ENCODE measurements at regions of chr6 and their contacts with region 1.

Region 1: DNA sequence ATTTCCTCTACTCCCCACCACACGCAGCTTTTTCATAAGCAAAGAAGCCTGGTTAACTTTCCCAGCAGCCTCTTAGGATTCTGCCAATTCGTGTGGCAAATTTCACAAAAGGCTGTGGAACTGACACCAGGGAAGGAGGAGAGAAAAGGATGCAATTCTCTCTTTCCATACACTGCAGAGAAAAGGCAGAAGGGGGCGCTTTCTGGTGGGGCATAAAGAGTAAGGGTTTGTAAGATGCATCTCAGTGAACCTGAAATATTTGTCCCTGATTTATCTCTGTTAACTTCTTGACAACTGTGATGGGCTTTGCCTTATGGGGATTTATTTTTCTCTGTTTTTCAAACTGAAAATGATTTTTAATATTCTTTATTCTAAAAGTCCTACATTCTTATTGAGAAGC is 45.5 kb upstream of the GLP1R start:
- DNase-seq: peak; percentile 48
- H3K4me3 Mint-ChIP-seq: no peak overlapping the region
- H3K27ac Mint-ChIP-seq: no peak overlapping the region
- H3K4me1 Mint-ChIP-seq: no peaks in the 10 kb centered on the region
- H3K27me3 Mint-ChIP-seq: peaks cover 19% of the 10 kb centered on the region

Region 2: GRCh38 chr6:39088331-39088730 is 85.3 kb after region 1 on chr6:
- CTCF ChIA-PET with region 1: interaction called, 3 read pairs
- intact Hi-C with region 1: loop called (anchors 2 kb)
- DNase-seq: peak; percentile 45
- H3K4me3 Mint-ChIP-seq: no peak overlapping the region
- H3K27ac Mint-ChIP-seq: no peak overlapping the region
- H3K4me1 Mint-ChIP-seq: peaks cover 3% of the 10 kb centered on the region
- H3K27me3 Mint-ChIP-seq: peaks cover 33% of the 10 kb centered on the region

Measured in activated naive CD4-positive, alpha-beta T cell treated with anti-CD3 and anti-CD28 coated beads for 36 hours (primary cell).